HCT116 (cell line): ENCODE measurements at regions of chr2 and their contacts with region 1.

Region 1: GRCh38 chr2:120312861-120313694 is 32.9 kb upstream of the INHBB start:
- DNase-seq: peak; percentile 60
- ATAC-seq: peak; percentile 86
- H3K4me3 ChIP-seq: peak overlapping the region; percentile 31 to 44
- H3K27ac ChIP-seq: no peak overlapping the region
- H3K4me1 ChIP-seq: peaks cover 0 to 11% of the 10 kb centered on the region in 2 experiments; a peak in 1 of 4 replicates
- H3K27me3 ChIP-seq: no peaks in the 10 kb centered on the region
- CTCF ChIP-seq: peak; percentile 84 to 99 (median 95)
- POLR2A ChIP-seq: no peak
- RAD21 ChIP-seq: peak; percentile 100

Region 2: DNA sequence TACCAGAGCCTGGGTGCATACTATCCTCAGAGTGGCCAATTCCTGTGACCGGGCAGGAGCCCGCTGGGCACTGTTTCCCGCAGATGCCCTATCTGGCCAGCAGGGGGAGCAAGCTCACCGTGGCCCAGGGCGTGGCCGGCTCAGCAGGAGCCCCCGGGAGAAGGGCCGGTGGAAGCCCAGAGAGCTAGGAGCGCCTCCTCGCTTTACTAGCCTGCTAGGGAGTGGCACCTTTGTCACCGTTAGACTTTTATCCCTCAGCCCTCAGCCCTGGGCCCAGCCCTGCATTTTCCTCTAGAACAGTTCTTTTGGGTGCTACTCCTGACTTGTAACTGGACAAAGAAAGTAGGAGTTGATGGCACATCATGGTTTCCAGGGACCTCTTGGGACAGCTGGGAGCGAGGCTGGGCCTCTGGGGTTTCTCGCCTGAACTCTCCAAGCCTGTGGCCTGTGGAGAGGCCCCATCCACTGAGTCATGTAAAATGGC is 610.1 kb before region 1 on chr2:
- CTCF ChIA-PET with region 1: interaction called, 6 read pairs
- POLR2A ChIA-PET with region 1: no interaction called
- RAD21 ChIA-PET with region 1: no interaction called
- intact Hi-C with region 1: loop called (anchors 5 kb)
- DNase-seq: peak; percentile 58
- ATAC-seq: peak; percentile 99
- H3K4me3 ChIP-seq: no peak overlapping the region
- H3K27ac ChIP-seq: no peak overlapping the region
- H3K4me1 ChIP-seq: peaks cover 0 to 5% of the 10 kb centered on the region in 2 experiments; a peak in 1 of 4 replicates
- H3K27me3 ChIP-seq: no peaks in the 10 kb centered on the region
- CTCF ChIP-seq: peak; percentile 93 to 98 (median 97)
- POLR2A ChIP-seq: no peak
- RAD21 ChIP-seq: peak; percentile 92

Region 3: GRCh38 chr2:120109186-120110061 is 203.7 kb before region 1 on chr2:
- CTCF ChIA-PET with region 1: interaction called, 16 read pairs
- POLR2A ChIA-PET with region 1: no interaction called
- RAD21 ChIA-PET with region 1: interaction called in 1 of 2 experiments, 4 read pairs
- intact Hi-C with region 1: loop called (anchors 2 kb)
- DNase-seq: peak; percentile 12
- ATAC-seq: peak; percentile 80
- H3K4me3 ChIP-seq: no peak overlapping the region
- H3K27ac ChIP-seq: no peak overlapping the region
- H3K4me1 ChIP-seq: peaks cover 0 to 6% of the 10 kb centered on the region in 2 experiments; a peak in 1 of 4 replicates
- H3K27me3 ChIP-seq: no peaks in the 10 kb centered on the region
- CTCF ChIP-seq: peak; percentile 31 to 75 (median 62)
- POLR2A ChIP-seq: no peak
- RAD21 ChIP-seq: peak; percentile 68

Region 4: DNA sequence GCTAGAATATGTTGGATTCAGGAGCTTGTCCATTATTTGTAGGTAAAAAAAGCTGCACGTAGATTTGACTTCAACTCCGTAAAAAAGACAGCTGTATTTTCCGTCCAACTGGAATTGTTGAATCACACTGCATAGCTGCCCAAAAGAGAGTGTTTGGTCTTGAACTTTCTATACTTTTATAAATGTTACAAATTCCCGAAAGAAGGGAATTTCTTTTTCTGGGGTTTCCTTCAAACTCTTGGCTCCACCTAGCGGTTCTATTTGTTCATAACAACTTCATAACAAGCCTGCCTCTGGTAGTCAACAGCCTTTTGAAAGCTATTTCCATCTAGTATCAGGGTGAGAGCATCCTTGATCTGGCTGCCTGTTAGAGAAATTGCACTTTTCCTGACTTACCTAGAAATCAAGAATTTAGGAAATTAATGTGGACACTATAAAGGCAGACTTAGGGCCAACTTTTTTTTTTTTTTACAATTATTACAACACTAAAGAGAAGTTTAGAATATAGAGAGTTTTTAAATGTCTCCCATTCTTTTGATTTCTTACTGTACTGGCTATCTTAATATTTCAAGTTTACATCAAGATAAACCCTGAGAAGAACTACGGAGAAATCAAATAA is 138.0 kb before region 1 on chr2:
- CTCF ChIA-PET with region 1: interaction called, 20 read pairs
- POLR2A ChIA-PET with region 1: no interaction called
- RAD21 ChIA-PET with region 1: interaction called, 3 read pairs
- intact Hi-C with region 1: no loop called
- DNase-seq: peak; percentile 28
- ATAC-seq: peak; percentile 69; the same call in 1 of the 2 replicates
- H3K4me3 ChIP-seq: no peak overlapping the region
- H3K27ac ChIP-seq: no peak overlapping the region
- H3K4me1 ChIP-seq: no peaks in the 10 kb centered on the region
- H3K27me3 ChIP-seq: no peaks in the 10 kb centered on the region
- CTCF ChIP-seq: peak; percentile 63 to 78 (median 72); a peak in 5 of 6 replicates
- POLR2A ChIP-seq: no peak
- RAD21 ChIP-seq: peak; percentile 81

Region 5: DNA sequence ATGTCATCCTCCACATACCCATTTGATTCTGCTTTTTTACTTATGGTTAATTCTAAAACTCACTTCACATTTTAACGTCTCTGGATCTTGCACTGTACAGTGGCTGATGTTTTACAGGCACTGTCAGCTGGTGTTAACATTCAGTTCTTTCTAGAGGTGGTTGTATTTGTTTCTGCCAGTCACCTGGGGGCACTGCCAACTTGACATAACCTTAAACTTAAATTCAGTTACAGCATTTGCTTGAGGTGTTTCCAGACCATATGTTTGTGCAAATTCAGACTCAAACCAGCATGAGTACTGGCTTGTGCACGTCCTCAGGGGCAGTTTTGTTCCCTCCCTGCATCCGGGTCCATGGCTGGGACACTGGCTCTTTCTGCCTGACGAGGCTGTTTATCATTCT is 84.5 kb before region 1 on chr2:
- CTCF ChIA-PET with region 1: interaction called, 7 read pairs
- POLR2A ChIA-PET with region 1: no interaction called
- RAD21 ChIA-PET with region 1: interaction called in 1 of 2 experiments, 3 read pairs
- intact Hi-C with region 1: loop called (anchors 2 kb)
- DNase-seq: no peak
- ATAC-seq: no peak
- H3K4me3 ChIP-seq: no peak overlapping the region
- H3K27ac ChIP-seq: no peak overlapping the region
- H3K4me1 ChIP-seq: peaks cover 6 to 21% of the 10 kb centered on the region in 2 experiments; a peak in 3 of 4 replicates
- H3K27me3 ChIP-seq: no peaks in the 10 kb centered on the region
- CTCF ChIP-seq: peak in 2 of 3 experiments; percentile 12 to 78; a peak in 1 of 6 replicates
- POLR2A ChIP-seq: no peak
- RAD21 ChIP-seq: peak; percentile 82

Region 6: GRCh38 chr2:120252225-120253021 is 60.7 kb before region 1 on chr2 and contains the start of gene RALB:
- CTCF ChIA-PET with region 1: interaction called, 6 read pairs
- POLR2A ChIA-PET with region 1: no interaction called
- RAD21 ChIA-PET with region 1: no interaction called
- intact Hi-C with region 1: loop called (anchors 5 kb)
- DNase-seq: peak; percentile 96
- ATAC-seq: peak; percentile 92
- H3K4me3 ChIP-seq: peak within 1 kb of the TSS; percentile 78 to 83
- H3K27ac ChIP-seq: peak within 1 kb of the TSS; percentile 62
- H3K4me1 ChIP-seq: peaks cover 7 to 18% of the 10 kb centered on the region in 2 experiments; a peak in 3 of 4 replicates
- H3K27me3 ChIP-seq: no peaks in the 10 kb centered on the region
- CTCF ChIP-seq: no peak
- POLR2A ChIP-seq: peak; percentile 61
- RAD21 ChIP-seq: no peak
- total RNA-seq, gene RALB: 42.8 TPM

Region 7: DNA sequence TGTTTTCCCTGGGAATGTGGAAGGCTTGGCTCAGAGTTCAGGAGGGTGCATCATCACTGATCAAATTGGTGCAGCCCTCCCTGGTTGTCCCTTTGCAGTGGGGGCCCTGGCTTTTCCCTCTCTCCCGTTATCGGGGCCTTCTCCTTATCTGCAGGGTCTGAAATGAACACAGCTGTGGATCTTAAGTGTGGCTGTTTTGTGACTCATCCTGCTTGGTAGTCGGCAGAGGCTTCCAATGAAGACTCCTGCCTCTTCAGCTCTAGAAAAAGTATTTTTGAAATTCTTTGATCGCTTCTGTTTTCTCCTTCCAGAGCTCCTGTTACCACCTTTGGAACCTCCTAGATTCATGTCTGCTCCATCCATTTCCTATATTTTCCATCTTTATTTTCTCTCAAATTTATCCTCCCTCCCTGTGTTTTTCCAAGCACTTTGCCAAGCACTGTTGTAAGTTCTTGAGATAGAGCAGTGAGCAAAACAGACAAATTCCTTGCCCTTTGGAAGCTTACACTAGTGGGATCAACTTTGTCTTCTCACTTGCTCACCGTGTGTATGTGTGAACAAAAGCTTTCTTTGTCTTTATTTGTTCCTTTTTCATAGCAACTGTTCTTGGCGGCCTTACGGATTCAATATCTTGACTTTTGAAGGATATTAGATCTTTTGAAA is 14.8 kb before region 1 on chr2:
- CTCF ChIA-PET with region 1: interaction called, 10 read pairs
- POLR2A ChIA-PET with region 1: no interaction called
- RAD21 ChIA-PET with region 1: no interaction called
- intact Hi-C with region 1: no loop called
- DNase-seq: no peak
- ATAC-seq: no peak
- H3K4me3 ChIP-seq: no peak overlapping the region
- H3K27ac ChIP-seq: no peak overlapping the region
- H3K4me1 ChIP-seq: no peaks in the 10 kb centered on the region
- H3K27me3 ChIP-seq: no peaks in the 10 kb centered on the region
- CTCF ChIP-seq: no peak
- POLR2A ChIP-seq: no peak
- RAD21 ChIP-seq: no peak

Region 8: DNA sequence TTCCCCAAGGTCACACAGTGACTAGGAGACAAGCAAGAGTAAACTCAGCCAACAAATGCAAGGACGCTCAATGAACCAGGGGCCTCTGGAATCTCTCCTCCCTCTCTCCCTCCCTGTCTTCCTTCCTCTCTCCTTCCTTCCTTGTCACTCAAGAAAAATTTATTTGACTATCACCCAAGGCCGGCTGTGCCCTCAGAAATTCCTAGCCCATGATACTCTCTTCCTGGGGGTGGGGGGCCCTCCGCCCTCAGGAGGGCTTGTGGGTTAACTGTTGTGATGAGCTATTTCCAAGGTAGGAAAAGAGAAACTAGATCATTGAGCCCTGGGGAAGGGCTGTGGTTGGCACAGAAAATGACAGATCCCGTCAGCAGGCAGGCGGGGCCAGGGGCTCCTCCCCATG is 54.6 kb after region 1 on chr2:
- CTCF ChIA-PET with region 1: no interaction called
- POLR2A ChIA-PET with region 1: no interaction called
- RAD21 ChIA-PET with region 1: no interaction called
- intact Hi-C with region 1: no loop called
- DNase-seq: no peak
- ATAC-seq: no peak
- H3K4me3 ChIP-seq: no peak overlapping the region
- H3K27ac ChIP-seq: no peak overlapping the region
- H3K4me1 ChIP-seq: no peaks in the 10 kb centered on the region
- H3K27me3 ChIP-seq: no peaks in the 10 kb centered on the region
- CTCF ChIP-seq: no peak
- POLR2A ChIP-seq: no peak
- RAD21 ChIP-seq: no peak